Endothelial cell of umbilical vein (primary cell): ENCODE measurements at regions of chr12 and their contacts with region 1.

Region 1: GRCh38 chr12:50111693-50112455 is at the start of gene COX14:
- DNase-seq: peak; percentile 100
- H3K4me3 ChIP-seq: peak within 1 kb of the TSS; percentile 0 to 76 (median 59)
- H3K27ac ChIP-seq: peak within 1 kb of the TSS; percentile 6
- H3K4me1 ChIP-seq: peaks cover 9% of the 10 kb centered on the region
- H3K27me3 ChIP-seq: no peaks in the 10 kb centered on the region
- CTCF ChIP-seq: peak; percentile 98 to 99
- POLR2A ChIP-seq: peak; percentile 92
- total RNA-seq, gene COX14: 40.0 and 40.3 TPM in 2 replicates

Region 2: GRCh38 chr12:50084775-50085614 is 26.9 kb before region 1 on chr12 and contains the start of gene SMARCD1:
- CTCF ChIA-PET with region 1: interaction called, 89 read pairs
- POLR2A ChIA-PET with region 1: interaction called, 17 read pairs
- dilution Hi-C with region 1: no loop called
- intact Hi-C with region 1: loop called (anchors 1 kb)
- DNase-seq: peak; percentile 92
- H3K4me3 ChIP-seq: peak within 1 kb of the TSS; percentile 51 to 95 (median 80)
- H3K27ac ChIP-seq: peak within 1 kb of the TSS; percentile 72
- H3K4me1 ChIP-seq: peaks cover 35% of the 10 kb centered on the region
- H3K27me3 ChIP-seq: no peaks in the 10 kb centered on the region
- CTCF ChIP-seq: peak; percentile 50 to 71
- POLR2A ChIP-seq: no peak
- total RNA-seq, gene SMARCD1: 86.6 and 101 TPM in 2 replicates

Region 3: DNA sequence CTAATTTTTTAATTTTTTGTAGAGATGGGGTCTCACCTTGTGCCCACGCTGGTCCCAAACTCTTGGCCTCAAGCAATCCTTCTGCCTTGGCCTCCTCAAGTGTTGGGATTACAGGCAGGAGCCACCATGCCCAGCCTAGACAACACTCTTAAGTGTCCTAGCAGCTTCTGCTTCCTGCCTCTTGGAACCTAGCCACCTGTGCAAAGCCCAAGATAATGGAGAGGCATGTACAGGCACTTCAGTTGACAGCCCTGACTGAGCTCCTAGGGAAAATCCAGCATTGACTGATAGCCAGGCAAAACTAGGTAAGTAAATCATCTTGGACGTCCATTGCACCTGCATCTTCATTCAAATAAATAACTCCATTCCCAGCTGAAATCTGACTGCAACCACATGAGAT is 15.7 kb after region 1 on chr12:
- CTCF ChIA-PET with region 1: interaction called, 22 read pairs
- POLR2A ChIA-PET with region 1: interaction called, 3 read pairs
- dilution Hi-C with region 1: no loop called
- intact Hi-C with region 1: no loop called
- DNase-seq: no peak
- H3K4me3 ChIP-seq: no peak overlapping the region
- H3K27ac ChIP-seq: no peak overlapping the region
- H3K4me1 ChIP-seq: peaks cover 5% of the 10 kb centered on the region
- H3K27me3 ChIP-seq: no peaks in the 10 kb centered on the region
- CTCF ChIP-seq: no peak
- POLR2A ChIP-seq: no peak

Region 4: GRCh38 chr12:50132505-50133135 is 20.7 kb after region 1 on chr12:
- CTCF ChIA-PET with region 1: interaction called, 22 read pairs
- POLR2A ChIA-PET with region 1: interaction called, 3 read pairs
- dilution Hi-C with region 1: no loop called
- intact Hi-C with region 1: no loop called
- DNase-seq: no peak
- H3K4me3 ChIP-seq: no peak overlapping the region
- H3K27ac ChIP-seq: no peak overlapping the region
- H3K4me1 ChIP-seq: peaks cover 4% of the 10 kb centered on the region
- H3K27me3 ChIP-seq: no peaks in the 10 kb centered on the region
- CTCF ChIP-seq: peak in 1 of 2 donors; percentile 46
- POLR2A ChIP-seq: no peak

Region 5: DNA sequence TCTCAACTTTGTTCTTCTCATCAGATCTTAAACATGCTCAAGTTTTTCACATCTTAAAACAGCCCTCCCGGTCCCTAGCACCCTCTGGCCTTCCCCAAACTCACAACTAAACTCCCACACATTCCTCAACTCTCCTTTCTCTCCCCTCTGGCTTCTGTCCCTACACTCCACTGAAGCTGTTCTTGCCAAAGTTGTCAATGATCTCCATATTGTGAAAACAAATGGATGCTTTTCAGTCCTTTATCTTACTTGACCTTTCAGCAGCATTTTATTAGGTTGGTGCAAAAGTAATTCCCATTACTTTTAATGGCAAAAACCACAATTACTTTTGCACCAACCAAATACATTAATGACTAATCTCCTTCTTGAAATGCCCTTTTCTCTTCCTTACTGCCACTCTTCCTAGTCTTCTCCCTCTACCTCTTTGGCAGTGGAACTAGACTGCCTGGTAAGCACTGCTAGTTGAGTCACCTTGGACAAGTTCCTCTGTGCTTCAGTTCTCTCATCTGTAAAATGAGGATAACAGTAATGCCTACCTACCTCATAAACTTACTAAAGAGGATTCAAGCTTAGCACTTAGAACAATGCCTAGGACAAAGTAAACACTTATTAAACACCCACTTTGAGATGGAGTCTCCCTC is 39.3 kb after region 1 on chr12:
- CTCF ChIA-PET with region 1: interaction called, 14 read pairs
- POLR2A ChIA-PET with region 1: no interaction called
- dilution Hi-C with region 1: no loop called
- intact Hi-C with region 1: no loop called
- DNase-seq: no peak
- H3K4me3 ChIP-seq: no peak overlapping the region
- H3K27ac ChIP-seq: no peak overlapping the region
- H3K4me1 ChIP-seq: no peaks in the 10 kb centered on the region
- H3K27me3 ChIP-seq: no peaks in the 10 kb centered on the region
- CTCF ChIP-seq: no peak
- POLR2A ChIP-seq: no peak

Region 6: GRCh38 chr12:50167041-50167828 is 55.4 kb after region 1 on chr12 and contains the start of gene CERS5:
- CTCF ChIA-PET with region 1: interaction called, 33 read pairs
- POLR2A ChIA-PET with region 1: interaction called, 20 read pairs
- dilution Hi-C with region 1: no loop called
- intact Hi-C with region 1: loop called (anchors 1 kb)
- DNase-seq: peak; percentile 99
- H3K4me3 ChIP-seq: peak within 1 kb of the TSS; percentile 92 to 98 (median 93)
- H3K27ac ChIP-seq: peak within 1 kb of the TSS; percentile 75
- H3K4me1 ChIP-seq: peaks cover 7% of the 10 kb centered on the region
- H3K27me3 ChIP-seq: no peaks in the 10 kb centered on the region
- CTCF ChIP-seq: no peak
- POLR2A ChIP-seq: peak; percentile 91
- total RNA-seq, gene CERS5: 60.4 and 66.4 TPM in 2 replicates

Region 7: GRCh38 chr12:50174971-50175715 is 63.3 kb after region 1 on chr12:
- CTCF ChIA-PET with region 1: interaction called, 52 read pairs
- POLR2A ChIA-PET with region 1: no interaction called
- dilution Hi-C with region 1: no loop called
- intact Hi-C with region 1: loop called (anchors 1 kb)
- DNase-seq: peak; percentile 87
- H3K4me3 ChIP-seq: no peak overlapping the region
- H3K27ac ChIP-seq: no peak overlapping the region
- H3K4me1 ChIP-seq: no peaks in the 10 kb centered on the region
- H3K27me3 ChIP-seq: no peaks in the 10 kb centered on the region
- CTCF ChIP-seq: peak; percentile 27 to 38
- POLR2A ChIP-seq: no peak